Activated T-helper 1 cell treated with anti-CD3 and anti-CD28 coated beads, Interleukin-12 subunit alpha, Interleukin-12 subunit beta, Interleukin-2, Interleukin-4 antibody, amounts not matched to agents 30 ng/mL and 10 ng/mL and 1 ng/mL, durations not matched to agents 14 hours and 24 hours and 36 hours (primary cell): ENCODE measurements at regions of chr1 and their contacts with region 1.

Region 1: DNA sequence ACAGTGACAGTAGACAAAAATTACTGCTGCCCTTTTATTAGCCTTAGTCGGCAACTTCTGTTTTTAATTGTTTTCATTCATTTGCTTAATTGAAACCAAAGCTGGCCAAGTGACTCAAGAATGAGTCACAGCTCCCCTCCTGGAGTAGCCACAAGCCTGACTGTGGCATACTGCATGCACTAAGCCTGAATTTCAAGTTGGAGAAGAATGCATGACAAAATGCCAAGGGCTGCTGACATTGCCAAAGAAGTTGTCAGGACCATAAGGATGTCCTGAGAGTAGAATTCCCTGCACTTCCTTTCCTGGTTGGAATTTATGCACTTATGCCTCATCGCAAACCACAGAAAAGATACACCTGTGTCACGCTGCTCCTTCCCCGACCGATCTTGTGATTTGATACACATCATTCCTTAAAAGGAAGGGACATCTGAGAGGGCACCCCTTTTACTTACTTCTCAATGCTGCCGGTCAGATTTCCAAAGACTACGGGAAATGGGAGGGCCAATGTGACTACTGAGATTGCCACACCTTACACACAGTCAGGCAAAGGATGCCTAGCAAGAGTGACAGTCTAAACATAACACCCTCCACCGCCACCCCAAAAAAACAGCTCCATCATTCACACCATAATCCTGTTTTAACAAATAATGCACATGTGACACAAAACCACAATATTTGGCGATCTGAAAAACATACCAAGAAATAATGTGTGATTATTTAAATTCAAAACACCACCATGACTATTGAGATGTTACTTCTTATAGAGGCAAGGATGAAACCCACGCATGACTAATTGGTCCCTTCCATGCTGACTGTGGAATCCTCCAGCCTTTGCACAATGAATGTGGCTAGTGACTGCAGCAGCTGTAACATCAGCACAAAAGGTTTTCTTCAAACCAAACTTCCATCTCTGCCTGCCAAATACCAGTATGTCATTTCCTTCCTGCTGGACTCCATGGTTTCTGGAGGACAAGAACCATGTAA is 28.2 kb downstream of the VAV3 start:
- DNase-seq: no peak
- H3K4me3 Mint-ChIP-seq: peak overlapping the region; percentile 70
- H3K27ac Mint-ChIP-seq: peak overlapping the region; percentile 83
- H3K4me1 Mint-ChIP-seq: peaks cover 57% of the 10 kb centered on the region
- H3K27me3 Mint-ChIP-seq: no peaks in the 10 kb centered on the region

Region 2: DNA sequence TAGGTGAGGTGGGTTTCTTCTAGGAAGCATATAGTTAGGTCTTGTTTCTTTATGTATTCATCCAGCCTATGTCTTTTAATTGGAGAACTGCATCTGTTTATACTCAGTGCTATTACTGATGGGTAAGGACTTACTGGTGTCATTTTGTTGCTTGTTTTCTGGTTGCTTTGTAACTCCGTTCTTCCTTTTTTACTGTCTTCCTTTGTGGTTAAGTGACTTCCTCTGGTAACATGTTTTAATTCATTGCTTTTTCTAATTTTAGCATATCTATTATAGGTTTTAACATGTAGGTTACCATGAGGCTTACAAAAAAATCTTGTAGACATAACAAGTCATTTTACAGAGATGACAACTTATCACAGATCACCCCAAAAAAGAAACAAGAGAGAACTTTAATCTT is 132.7 kb before region 1 on chr1:
- intact Hi-C with region 1: loop called (anchors 5 kb)
- DNase-seq: no peak
- H3K4me3 Mint-ChIP-seq: peak overlapping the region; percentile 8
- H3K27ac Mint-ChIP-seq: no peak overlapping the region
- H3K4me1 Mint-ChIP-seq: peaks cover 33% of the 10 kb centered on the region
- H3K27me3 Mint-ChIP-seq: peaks cover 4% of the 10 kb centered on the region

Region 3: DNA sequence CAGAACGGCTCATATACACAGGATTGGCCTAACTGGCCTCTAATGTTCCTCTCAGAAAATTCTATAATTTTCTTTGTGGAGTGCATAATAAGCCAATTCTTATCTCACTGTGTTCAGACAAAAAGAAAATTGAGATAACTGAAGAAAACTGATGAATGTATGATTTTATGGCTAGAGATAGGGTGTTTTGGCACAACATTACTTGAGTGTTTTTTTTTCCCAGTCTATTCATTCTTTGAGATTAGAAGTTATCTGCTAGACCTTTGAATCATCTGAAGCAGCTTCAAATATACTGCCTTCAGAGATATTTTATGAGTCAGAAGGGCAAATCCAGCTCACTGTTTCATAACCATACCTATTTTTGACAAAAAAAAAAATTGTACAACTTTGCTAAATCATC is 57.4 kb before region 1 on chr1:
- intact Hi-C with region 1: loop called (anchors 1 kb)
- DNase-seq: no peak
- H3K4me3 Mint-ChIP-seq: no peak overlapping the region
- H3K27ac Mint-ChIP-seq: no peak overlapping the region
- H3K4me1 Mint-ChIP-seq: peaks cover 8% of the 10 kb centered on the region
- H3K27me3 Mint-ChIP-seq: no peaks in the 10 kb centered on the region

Region 4: GRCh38 chr1:107914134-107914765 is 22.5 kb before region 1 on chr1:
- intact Hi-C with region 1: no loop called
- DNase-seq: no peak
- H3K4me3 Mint-ChIP-seq: no peak overlapping the region
- H3K27ac Mint-ChIP-seq: no peak overlapping the region
- H3K4me1 Mint-ChIP-seq: peaks cover 7% of the 10 kb centered on the region
- H3K27me3 Mint-ChIP-seq: no peaks in the 10 kb centered on the region

Region 5: GRCh38 chr1:107976836-107977235 is 40.0 kb after region 1 on chr1:
- intact Hi-C with region 1: loop called (anchors 5 kb)
- DNase-seq: no peak
- H3K4me3 Mint-ChIP-seq: no peak overlapping the region
- H3K27ac Mint-ChIP-seq: no peak overlapping the region
- H3K4me1 Mint-ChIP-seq: no peaks in the 10 kb centered on the region
- H3K27me3 Mint-ChIP-seq: peaks cover 9% of the 10 kb centered on the region

Region 6: DNA sequence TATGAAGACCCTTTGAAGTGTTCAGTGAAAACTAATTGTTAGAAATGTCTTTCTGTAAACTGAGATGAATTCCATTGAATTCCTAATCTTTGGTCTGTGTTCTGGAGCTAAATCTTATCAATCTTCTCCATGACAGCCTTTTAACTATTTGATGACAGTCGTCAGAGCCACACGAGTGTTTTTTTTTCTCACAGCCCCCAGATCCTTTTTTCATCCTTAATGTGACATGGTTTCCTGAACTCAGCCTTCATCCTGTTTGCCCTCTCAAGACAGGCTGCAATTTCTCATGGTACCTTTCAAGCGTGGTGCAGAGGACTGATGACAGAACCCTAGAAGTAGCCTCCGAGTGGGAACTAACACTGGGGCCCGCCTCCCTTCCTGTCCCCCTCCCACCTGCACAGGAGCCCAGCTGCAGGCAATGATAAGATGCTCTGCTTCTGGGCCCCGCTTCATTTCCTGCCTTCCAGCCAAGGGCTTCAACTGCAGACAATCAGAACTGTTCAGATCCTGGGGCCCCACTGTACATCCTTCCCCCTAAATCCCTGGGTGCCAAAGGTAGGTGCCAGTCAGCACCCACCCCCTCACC is 142.7 kb after region 1 on chr1:
- intact Hi-C with region 1: loop called (anchors 1 kb)
- DNase-seq: peak; percentile 24
- H3K4me3 Mint-ChIP-seq: peak overlapping the region; percentile 32
- H3K27ac Mint-ChIP-seq: peak overlapping the region; percentile 56
- H3K4me1 Mint-ChIP-seq: peaks cover 64% of the 10 kb centered on the region
- H3K27me3 Mint-ChIP-seq: no peaks in the 10 kb centered on the region

Region 7: GRCh38 chr1:108643492-108644335 is 706.9 kb after region 1 on chr1:
- intact Hi-C with region 1: loop called (anchors 5 kb)
- DNase-seq: peak; percentile 30
- H3K4me3 Mint-ChIP-seq: peak overlapping the region; percentile 31
- H3K27ac Mint-ChIP-seq: peak overlapping the region; percentile 68
- H3K4me1 Mint-ChIP-seq: peaks cover 71% of the 10 kb centered on the region
- H3K27me3 Mint-ChIP-seq: no peaks in the 10 kb centered on the region